Dendritic cell treated with granulocyte-macrophage colony-stimulating factor and Interleukin-4, amounts not matched to agents 40 ng/mL and 50 ng/mL, for 4 days (primary cell): ENCODE measurements at regions of chr2 and their contacts with region 1.

Region 1: DNA sequence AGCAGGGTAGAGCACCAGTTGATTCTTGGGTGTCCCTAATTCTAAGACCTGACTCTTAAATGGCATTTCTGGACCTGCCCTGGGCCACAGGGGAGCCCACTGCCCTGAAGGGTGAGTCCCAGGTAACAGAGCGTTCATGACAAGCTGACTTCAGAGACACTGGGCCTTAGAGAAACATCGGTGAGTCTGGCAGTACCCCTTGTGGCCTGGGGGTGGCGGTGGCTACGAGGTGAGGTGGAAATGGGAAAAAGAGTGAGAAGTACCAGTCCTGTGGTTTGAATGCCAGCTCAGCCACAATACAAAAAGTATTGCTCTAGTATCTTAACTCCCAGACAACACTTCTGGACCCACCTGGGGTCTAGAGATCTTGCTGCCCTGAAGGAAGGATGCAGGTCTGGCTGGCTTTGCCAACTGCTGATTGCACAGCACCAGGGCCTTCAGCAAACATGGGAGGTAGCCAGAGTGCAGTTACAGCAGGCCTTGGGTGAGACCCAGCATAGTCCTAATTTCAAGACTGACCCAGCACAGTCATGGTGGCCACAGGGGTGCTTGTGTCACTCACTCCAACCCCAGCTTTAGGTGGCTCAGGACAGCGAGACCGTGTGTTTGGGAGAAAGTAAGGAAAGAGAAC is 44.5 kb downstream of the USP34 start:
- H3K4me3 Mint-ChIP-seq: no peak overlapping the region
- H3K27ac Mint-ChIP-seq: no peak overlapping the region
- H3K4me1 Mint-ChIP-seq: peaks cover 56% of the 10 kb centered on the region
- H3K27me3 Mint-ChIP-seq: no peaks in the 10 kb centered on the region

Region 2: DNA sequence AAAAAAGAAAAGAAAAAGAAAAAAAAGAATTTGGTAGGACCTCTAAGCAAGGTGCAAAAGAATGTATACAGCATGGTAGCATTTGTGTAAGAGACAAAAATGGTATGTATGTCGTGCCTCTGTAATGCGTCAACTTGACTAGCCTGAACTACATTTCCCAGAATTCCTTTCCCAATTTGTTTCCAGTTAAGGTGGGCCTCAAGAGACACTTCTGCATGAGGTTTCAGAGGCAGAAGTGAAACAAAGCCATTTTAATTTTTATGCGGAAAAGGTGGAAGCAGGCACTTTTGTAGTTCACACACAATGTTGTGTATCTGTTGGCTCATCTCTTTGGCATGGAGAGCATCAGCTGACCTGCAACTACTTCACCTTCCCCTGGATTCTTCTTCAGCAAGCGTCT is 726.8 kb before region 1 on chr2:
- intact Hi-C with region 1: no loop called
- H3K4me3 Mint-ChIP-seq: no peak overlapping the region
- H3K27ac Mint-ChIP-seq: peak overlapping the region; percentile 45
- H3K4me1 Mint-ChIP-seq: peaks cover 12% of the 10 kb centered on the region
- H3K27me3 Mint-ChIP-seq: no peaks in the 10 kb centered on the region

Region 3: DNA sequence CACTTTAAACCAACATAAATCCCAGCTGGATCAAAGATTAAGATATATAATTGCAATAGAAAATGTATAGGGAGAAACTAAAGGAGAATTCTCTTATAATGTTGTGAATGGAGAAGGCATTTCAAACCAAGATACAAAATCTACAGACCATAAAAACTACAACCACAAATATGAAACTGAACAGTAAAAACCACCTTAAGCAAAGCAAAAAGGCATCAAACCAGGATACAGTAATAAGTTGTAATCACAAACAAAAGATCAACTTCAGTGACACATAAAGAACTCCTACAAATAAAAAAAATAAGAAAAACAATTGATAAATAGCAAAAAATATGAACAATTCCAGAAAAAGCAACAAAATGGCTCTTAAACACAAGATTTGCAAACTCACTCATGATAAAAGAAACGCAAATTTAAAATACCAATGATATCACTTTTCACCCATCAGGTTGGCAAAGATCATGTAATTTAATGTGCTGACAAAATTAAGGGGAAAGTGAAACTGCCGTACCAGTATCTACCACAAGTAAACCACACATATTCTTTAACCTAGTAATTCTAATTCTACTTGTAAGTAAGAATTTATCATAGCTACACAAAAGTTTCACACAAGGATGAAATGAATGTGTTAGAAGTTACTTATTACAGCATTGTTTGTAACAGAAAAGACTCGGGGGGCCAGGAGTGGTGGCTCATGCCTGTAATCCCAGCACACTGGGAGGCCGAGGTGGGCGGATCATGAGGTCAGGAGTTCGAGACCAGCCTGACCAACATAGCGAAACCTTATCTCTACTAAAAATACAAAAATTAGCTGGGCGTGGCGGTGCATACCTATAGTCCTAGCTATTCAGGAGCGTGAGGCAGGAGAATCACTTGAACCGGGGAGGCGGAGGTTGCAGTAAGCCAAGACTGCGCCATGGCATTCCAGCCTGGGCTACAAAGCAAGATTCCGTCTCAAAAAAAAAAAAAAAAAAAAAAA is 57.4 kb before region 1 on chr2:
- intact Hi-C with region 1: no loop called
- H3K4me3 Mint-ChIP-seq: no peak overlapping the region
- H3K27ac Mint-ChIP-seq: no peak overlapping the region
- H3K4me1 Mint-ChIP-seq: no peaks in the 10 kb centered on the region
- H3K27me3 Mint-ChIP-seq: no peaks in the 10 kb centered on the region

Region 4: GRCh38 chr2:61470965-61471904 is 44.9 kb after region 1 on chr2 and contains the start of gene USP34:
- intact Hi-C with region 1: loop called (anchors 2 kb)
- H3K4me3 Mint-ChIP-seq: peak within 1 kb of the TSS; percentile 92
- H3K27ac Mint-ChIP-seq: peak within 1 kb of the TSS; percentile 99
- H3K4me1 Mint-ChIP-seq: peaks cover 20% of the 10 kb centered on the region
- H3K27me3 Mint-ChIP-seq: no peaks in the 10 kb centered on the region